CD14-positive monocyte (primary cell): ENCODE measurements at regions of chr11 and their contacts with region 1.

Region 1: GRCh38 chr11:119196833-119197483 is 9.2 kb upstream of the CBL start:
- DNase-seq: peak; percentile 84 to 92 (median 89)
- H3K4me3 ChIP-seq: peak overlapping the region in 1 of 3 experiments; percentile 2
- H3K4me3 Mint-ChIP-seq: no peak overlapping the region
- H3K27ac ChIP-seq: peak overlapping the region in 1 of 2 donors; percentile 39
- H3K27ac Mint-ChIP-seq: peak overlapping the region in 6 of 7 donors; percentile 10 to 83 (median 82)
- H3K4me1 ChIP-seq: peaks cover 41 to 52% of the 10 kb centered on the region in 2 donors
- H3K4me1 Mint-ChIP-seq: peaks cover 51% of the 10 kb centered on the region
- H3K27me3 ChIP-seq: no peaks in the 10 kb centered on the region
- H3K27me3 Mint-ChIP-seq: peaks cover 0 to 9% (median 2%) of the 10 kb centered on the region in 3 donors
- CTCF ChIP-seq: peak; percentile 82

Region 2: DNA sequence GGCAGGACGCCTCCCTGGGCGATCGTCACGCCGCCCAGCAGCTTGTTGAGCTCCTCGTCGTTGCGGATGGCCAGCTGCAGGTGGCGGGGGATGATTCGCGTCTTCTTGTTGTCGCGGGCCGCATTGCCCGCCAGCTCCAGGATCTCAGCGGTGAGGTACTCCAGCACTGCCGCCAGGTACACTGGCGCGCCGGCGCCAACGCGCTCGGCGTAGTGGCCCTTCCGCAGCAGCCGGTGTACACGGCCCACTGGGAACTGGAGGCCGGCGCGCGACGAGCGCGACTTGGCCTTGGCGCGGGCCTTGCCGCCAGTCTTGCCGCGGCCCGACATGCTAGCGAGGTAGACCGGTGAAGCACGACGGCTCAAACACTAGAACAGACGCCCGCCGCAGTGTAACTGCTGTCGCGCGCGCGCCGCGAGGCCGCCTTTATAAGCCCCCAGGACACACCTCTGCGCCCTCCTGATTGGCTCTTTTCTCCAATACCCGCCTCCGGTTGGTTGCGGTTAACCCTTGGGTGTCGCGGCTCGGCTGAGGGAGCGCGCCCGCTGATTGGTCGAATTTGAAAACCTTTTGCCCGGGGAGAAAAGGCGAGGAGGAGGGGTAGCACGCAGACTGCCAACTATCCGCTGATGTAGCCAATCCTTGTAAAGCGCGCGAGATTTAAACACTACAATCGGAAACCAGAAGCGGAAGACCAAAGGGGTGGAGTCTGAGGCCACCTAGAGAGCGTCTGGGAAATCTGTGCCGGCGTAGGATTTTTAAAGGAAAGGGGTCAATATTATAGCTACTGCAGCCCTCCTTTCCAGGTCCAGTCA is 101.7 kb before region 1 on chr11:
- intact Hi-C with region 1: loop called (anchors 10 kb)
- DNase-seq: peak; percentile 99 to 100 (median 99)
- H3K4me3 ChIP-seq: peak overlapping the region; percentile 59 to 92 (median 72)
- H3K4me3 Mint-ChIP-seq: peak overlapping the region; percentile 87 to 91
- H3K27ac ChIP-seq: peak overlapping the region; percentile 60 to 81
- H3K27ac Mint-ChIP-seq: peak overlapping the region; percentile 84 to 92 (median 91)
- H3K4me1 ChIP-seq: peaks cover 41 to 50% of the 10 kb centered on the region in 2 donors
- H3K4me1 Mint-ChIP-seq: peaks cover 47% of the 10 kb centered on the region
- H3K27me3 ChIP-seq: no peaks in the 10 kb centered on the region
- H3K27me3 Mint-ChIP-seq: peaks cover 0 to 1% (median 0%) of the 10 kb centered on the region in 3 donors
- CTCF ChIP-seq: peak; percentile 42

Region 3: GRCh38 chr11:119134389-119134978 is 62.5 kb before region 1 on chr11:
- intact Hi-C with region 1: no loop called
- DNase-seq: peak; percentile 52 to 76 (median 74)
- H3K4me3 ChIP-seq: no peak overlapping the region
- H3K4me3 Mint-ChIP-seq: no peak overlapping the region
- H3K27ac ChIP-seq: no peak overlapping the region
- H3K27ac Mint-ChIP-seq: peak overlapping the region in 2 of 7 donors; percentile 2 to 25
- H3K4me1 ChIP-seq: peaks cover 0 to 3% of the 10 kb centered on the region in 2 donors
- H3K4me1 Mint-ChIP-seq: peaks cover 15% of the 10 kb centered on the region
- H3K27me3 ChIP-seq: no peaks in the 10 kb centered on the region
- H3K27me3 Mint-ChIP-seq: peaks cover 4 to 6% (median 4%) of the 10 kb centered on the region in 3 donors
- CTCF ChIP-seq: peak; percentile 91

Region 4: DNA sequence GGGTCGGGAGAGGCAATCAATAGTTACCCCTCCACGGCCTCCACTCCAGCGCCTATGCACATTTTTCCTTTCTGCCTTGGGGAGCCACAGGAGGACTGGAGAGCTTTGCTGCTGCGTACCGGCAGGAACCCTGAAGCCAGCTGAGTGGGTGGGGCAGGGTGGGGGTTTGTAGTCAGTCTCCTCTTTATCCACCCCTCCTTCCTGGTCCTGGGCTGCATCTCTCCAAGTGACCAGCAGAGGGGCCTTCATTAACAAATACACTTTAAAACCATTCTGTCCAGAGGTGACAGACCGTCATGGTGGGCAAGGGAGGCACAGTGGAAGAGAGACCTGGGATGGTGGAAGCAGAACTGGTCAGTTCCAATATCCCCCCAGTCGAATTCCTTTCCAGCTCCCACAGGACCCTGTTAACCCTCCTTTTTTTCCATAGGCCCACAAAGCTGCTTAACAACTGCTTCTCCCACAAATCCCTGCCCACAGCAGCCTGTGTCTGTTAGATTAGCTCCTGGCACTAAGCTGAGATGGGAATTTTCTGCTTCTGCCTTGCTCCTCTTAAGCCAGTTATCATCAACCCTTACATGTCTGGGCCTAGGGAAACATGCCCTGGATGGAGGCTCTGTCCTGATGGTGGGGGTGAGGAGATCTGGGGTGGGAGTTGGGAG is 52.0 kb before region 1 on chr11:
- intact Hi-C with region 1: loop called (anchors 10 kb)
- DNase-seq: peak; percentile 60 to 68 (median 60)
- H3K4me3 ChIP-seq: no peak overlapping the region
- H3K4me3 Mint-ChIP-seq: peak overlapping the region in 1 of 2 donors; percentile 52
- H3K27ac ChIP-seq: no peak overlapping the region
- H3K27ac Mint-ChIP-seq: no peak overlapping the region
- H3K4me1 ChIP-seq: peaks cover 18 to 20% of the 10 kb centered on the region in 2 donors
- H3K4me1 Mint-ChIP-seq: peaks cover 28% of the 10 kb centered on the region
- H3K27me3 ChIP-seq: peaks cover 26 to 35% of the 10 kb centered on the region in 2 donors
- H3K27me3 Mint-ChIP-seq: peaks cover 35 to 54% (median 40%) of the 10 kb centered on the region in 3 donors
- CTCF ChIP-seq: peak; percentile 84

Region 5: DNA sequence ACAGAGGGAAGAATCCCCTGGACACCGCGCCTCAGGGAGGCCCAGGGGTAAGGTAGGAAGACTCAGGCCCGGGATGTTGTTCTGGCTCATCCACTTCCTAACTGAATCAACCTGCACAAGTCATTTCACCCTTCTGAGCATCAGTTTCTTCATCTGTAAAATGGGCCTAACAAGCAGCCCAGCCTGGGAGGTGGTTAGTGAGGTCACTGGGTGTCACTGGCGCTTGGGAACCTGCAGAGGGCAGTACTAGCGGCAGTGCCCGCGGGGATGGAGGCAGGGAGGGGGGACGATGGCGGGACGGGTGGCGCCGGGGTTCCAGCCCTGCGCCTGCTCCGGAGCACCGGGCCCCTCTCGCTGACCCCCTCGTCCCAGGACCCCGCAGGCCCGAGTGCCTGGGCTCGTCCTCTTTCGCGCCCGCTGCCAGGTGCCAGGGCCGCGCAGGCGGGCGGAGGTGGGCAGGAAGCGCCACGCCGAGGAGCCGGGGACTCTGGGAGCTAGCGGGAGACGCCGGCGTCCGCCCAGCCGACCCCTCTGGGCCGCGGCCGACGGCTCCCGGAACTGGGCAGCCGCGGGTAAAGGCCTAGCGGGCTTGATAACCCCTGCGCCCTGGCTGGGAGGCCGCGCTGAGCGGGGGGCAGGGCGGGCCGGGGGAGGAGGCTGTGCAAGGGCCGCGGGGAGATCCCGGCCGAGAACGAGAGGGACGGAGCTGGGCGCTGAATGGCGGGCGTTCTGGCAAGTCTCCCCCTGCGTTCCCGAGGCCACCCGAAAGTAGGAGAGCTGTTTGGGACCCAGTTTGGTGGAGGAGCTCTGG is 28.3 kb before region 1 on chr11 and contains the start of gene NLRX1:
- intact Hi-C with region 1: loop called in 1 of 2 experiments (anchors 2 kb)
- DNase-seq: peak; percentile 80 to 81 (median 81)
- H3K4me3 ChIP-seq: peak within 1 kb of the TSS; percentile 79 to 91 (median 79)
- H3K4me3 Mint-ChIP-seq: peak within 1 kb of the TSS; percentile 91
- H3K27ac ChIP-seq: peak within 1 kb of the TSS; percentile 58 to 86
- H3K27ac Mint-ChIP-seq: peak within 1 kb of the TSS; percentile 73 to 91 (median 83)
- H3K4me1 ChIP-seq: peaks cover 18 to 27% of the 10 kb centered on the region in 2 donors
- H3K4me1 Mint-ChIP-seq: peaks cover 22% of the 10 kb centered on the region
- H3K27me3 ChIP-seq: no peaks in the 10 kb centered on the region
- H3K27me3 Mint-ChIP-seq: no peaks in the 10 kb centered on the region
- CTCF ChIP-seq: peak; percentile 85
- polyA plus RNA-seq, gene NLRX1: 13.7 to 15.5 (median 14.2) TPM

Region 6: GRCh38 chr11:119334174-119334930 is 137.4 kb after region 1 on chr11 and contains the start of gene RNF26:
- intact Hi-C with region 1: no loop called
- DNase-seq: peak; percentile 94 to 98 (median 95)
- H3K4me3 ChIP-seq: peak within 1 kb of the TSS; percentile 65 to 95 (median 84)
- H3K4me3 Mint-ChIP-seq: peak within 1 kb of the TSS; percentile 94 to 100
- H3K27ac ChIP-seq: peak within 1 kb of the TSS; percentile 25 to 93
- H3K27ac Mint-ChIP-seq: peak within 1 kb of the TSS; percentile 97 to 100 (median 98)
- H3K4me1 ChIP-seq: peaks cover 15 to 29% of the 10 kb centered on the region in 2 donors
- H3K4me1 Mint-ChIP-seq: peaks cover 29% of the 10 kb centered on the region
- H3K27me3 ChIP-seq: peaks cover 5 to 13% of the 10 kb centered on the region in 2 donors
- H3K27me3 Mint-ChIP-seq: peaks cover 17 to 20% (median 17%) of the 10 kb centered on the region in 3 donors
- CTCF ChIP-seq: no peak
- polyA plus RNA-seq, gene RNF26: 6.8 to 27.6 (median 20.5) TPM